B cell (primary cell): ENCODE measurements at regions of chr9 and their contacts with region 1.

Region 1: DNA sequence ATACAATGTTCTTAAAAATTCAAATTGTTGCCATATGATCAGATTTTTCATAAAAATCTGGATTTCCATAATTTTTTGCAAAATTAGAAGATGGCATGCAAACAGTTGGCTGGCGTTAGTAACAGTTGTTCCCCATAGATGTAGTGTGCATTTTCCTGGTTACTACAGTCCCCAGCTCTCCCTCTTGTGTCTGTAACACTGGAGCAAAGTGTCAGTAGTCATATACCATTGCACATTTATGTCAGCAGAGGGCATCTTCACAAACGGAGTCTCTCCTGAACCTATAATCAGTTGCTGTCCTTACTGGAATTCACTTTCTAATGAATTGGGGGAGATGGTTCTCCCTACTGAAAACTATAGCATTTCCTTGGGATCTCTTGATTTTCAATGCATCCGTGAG is 44.7 kb upstream of the DMAC1 start:
- DNase-seq: peak; percentile 54
- ATAC-seq: no peak
- H3K4me3 ChIP-seq: no peak overlapping the region
- H3K4me3 Mint-ChIP-seq: no peak overlapping the region
- H3K27ac ChIP-seq: no peak overlapping the region
- H3K27ac Mint-ChIP-seq: no peak overlapping the region
- H3K4me1 ChIP-seq: peaks cover 0 to 7% of the 10 kb centered on the region in 2 donors
- H3K4me1 Mint-ChIP-seq: peaks cover 6% of the 10 kb centered on the region
- H3K27me3 ChIP-seq: no peaks in the 10 kb centered on the region
- H3K27me3 Mint-ChIP-seq: no peaks in the 10 kb centered on the region
- CTCF ChIP-seq: peak; percentile 69

Region 2: DNA sequence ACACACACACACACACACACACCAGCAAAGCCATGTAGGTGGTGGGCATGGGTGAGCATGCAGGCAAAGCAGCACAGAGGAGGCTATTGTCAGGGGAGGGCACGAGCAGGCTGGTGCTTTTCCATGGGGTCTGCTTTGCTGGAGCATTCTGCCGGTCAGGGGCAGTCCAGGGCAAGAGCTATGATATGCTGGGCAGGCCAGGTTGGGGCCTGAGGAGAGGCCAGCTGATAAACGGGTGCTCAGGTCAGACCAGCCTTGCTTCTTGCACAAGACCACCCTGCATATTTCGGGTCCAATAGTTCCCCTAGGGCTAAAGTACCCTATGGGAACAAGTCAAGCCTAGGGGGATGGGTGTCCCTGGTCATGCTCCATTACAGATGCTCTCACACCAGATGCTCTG is 209.3 kb after region 1 on chr9:
- CTCF ChIA-PET with region 1: interaction called, 7 read pairs
- POLR2A ChIA-PET with region 1: no interaction called
- intact Hi-C with region 1: loop called (anchors 10 kb)
- DNase-seq: no peak
- ATAC-seq: no peak
- H3K4me3 ChIP-seq: no peak overlapping the region
- H3K4me3 Mint-ChIP-seq: no peak overlapping the region
- H3K27ac ChIP-seq: no peak overlapping the region
- H3K27ac Mint-ChIP-seq: no peak overlapping the region
- H3K4me1 ChIP-seq: no peaks in the 10 kb centered on the region
- H3K4me1 Mint-ChIP-seq: peaks cover 3% of the 10 kb centered on the region
- H3K27me3 ChIP-seq: no peaks in the 10 kb centered on the region
- H3K27me3 Mint-ChIP-seq: no peaks in the 10 kb centered on the region
- CTCF ChIP-seq: no peak

Region 3: GRCh38 chr9:8179381-8180053 is 335.3 kb after region 1 on chr9:
- CTCF ChIA-PET with region 1: no interaction called
- POLR2A ChIA-PET with region 1: no interaction called
- intact Hi-C with region 1: loop called (anchors 5 kb)
- DNase-seq: no peak
- ATAC-seq: no peak
- H3K4me3 ChIP-seq: no peak overlapping the region
- H3K4me3 Mint-ChIP-seq: no peak overlapping the region
- H3K27ac ChIP-seq: no peak overlapping the region
- H3K27ac Mint-ChIP-seq: no peak overlapping the region
- H3K4me1 ChIP-seq: no peaks in the 10 kb centered on the region
- H3K4me1 Mint-ChIP-seq: peaks cover 2% of the 10 kb centered on the region
- H3K27me3 ChIP-seq: no peaks in the 10 kb centered on the region
- H3K27me3 Mint-ChIP-seq: no peaks in the 10 kb centered on the region
- CTCF ChIP-seq: no peak